GM12878 (cell line): ENCODE measurements at regions of chr6 and their contacts with region 1.

Region 1: DNA sequence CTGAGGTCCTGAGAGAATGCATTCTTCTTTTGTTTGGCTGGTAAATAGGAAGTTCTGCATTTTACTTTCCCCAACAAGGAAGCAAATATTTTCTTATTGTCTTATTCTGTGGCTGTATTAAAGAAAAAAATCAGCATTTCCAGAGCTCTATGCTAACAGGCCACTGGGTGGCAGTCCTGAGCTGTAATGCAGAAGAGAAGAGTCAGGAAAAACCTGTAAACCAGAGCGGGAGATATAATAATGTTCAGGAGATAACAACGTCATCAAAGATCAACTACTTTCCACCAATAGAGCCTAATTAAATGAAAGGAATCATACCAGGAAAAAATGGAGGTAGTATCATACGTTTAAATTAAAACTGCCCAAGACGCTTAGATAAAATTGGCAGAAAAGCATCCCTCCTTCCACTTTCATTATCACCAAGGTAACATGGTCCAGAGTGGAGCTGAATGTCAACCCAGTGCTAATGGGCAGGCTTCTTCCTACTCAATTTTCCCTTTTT is 55.6 kb upstream of the CARMIL1 start:
- DNase-seq: peak; percentile 19
- ATAC-seq: peak; percentile 81
- H3K4me3 ChIP-seq: no peak overlapping the region; the same call in 1 of the 2 replicates
- H3K27ac ChIP-seq: no peak overlapping the region
- H3K4me1 ChIP-seq: no peaks in the 10 kb centered on the region
- H3K27me3 ChIP-seq: no peaks in the 10 kb centered on the region; a peak in 1 of 4 replicates
- CTCF ChIP-seq: peak; percentile 82 to 90 (median 84)
- EP300 ChIP-seq: 0 out of 4 replicates have a peak, but pooled peaks of 1 of the 2 experiments have one; percentile 11
- POLR2A ChIP-seq: no peak
- RAD21 ChIP-seq: peak; percentile 91

Region 2: DNA sequence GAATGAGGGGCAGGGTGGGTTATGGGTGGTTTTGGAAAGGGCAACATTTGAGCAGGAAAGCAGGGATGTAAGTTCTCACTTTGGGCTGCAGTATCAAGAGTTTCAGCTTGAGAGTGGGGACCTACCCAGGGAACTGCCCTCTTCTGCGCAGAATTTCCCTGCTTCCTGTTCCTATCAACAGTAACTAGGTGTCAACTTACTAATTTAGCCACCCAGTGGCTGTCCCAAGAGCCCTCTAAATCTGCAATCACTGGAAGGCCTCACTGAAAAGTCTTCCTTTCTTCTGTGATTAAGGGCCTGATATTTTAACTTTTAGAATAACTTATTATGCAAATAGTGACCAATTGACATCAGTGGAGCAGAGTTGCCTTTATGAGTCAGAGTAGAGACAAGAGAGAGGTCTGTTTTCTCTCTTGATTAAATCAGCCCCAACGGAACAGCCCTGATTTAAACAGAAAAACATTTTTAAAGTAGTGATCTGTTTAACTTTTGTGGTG is 169.6 kb before region 1 on chr6:
- CTCF ChIA-PET with region 1: no interaction called
- POLR2A ChIA-PET with region 1: no interaction called
- RAD21 ChIA-PET with region 1: no interaction called
- SMC1A ChIA-PET with region 1: no interaction called
- in situ Hi-C with region 1: no loop called
- intact Hi-C with region 1: no loop called
- DNase-seq: no peak
- ATAC-seq: peak; percentile 93
- H3K4me3 ChIP-seq: no peak overlapping the region
- H3K27ac ChIP-seq: peak overlapping the region; percentile 41
- H3K4me1 ChIP-seq: peaks cover 26% of the 10 kb centered on the region
- H3K27me3 ChIP-seq: no peaks in the 10 kb centered on the region
- CTCF ChIP-seq: peak in 2 of 3 experiments; percentile 16 to 20; a peak in 2 of 6 replicates
- EP300 ChIP-seq: peak in 1 of 2 experiments; percentile 29; a peak in 1 of 4 replicates
- POLR2A ChIP-seq: no peak
- RAD21 ChIP-seq: peak; percentile 21; the same call in 1 of the 2 replicates

Region 3: DNA sequence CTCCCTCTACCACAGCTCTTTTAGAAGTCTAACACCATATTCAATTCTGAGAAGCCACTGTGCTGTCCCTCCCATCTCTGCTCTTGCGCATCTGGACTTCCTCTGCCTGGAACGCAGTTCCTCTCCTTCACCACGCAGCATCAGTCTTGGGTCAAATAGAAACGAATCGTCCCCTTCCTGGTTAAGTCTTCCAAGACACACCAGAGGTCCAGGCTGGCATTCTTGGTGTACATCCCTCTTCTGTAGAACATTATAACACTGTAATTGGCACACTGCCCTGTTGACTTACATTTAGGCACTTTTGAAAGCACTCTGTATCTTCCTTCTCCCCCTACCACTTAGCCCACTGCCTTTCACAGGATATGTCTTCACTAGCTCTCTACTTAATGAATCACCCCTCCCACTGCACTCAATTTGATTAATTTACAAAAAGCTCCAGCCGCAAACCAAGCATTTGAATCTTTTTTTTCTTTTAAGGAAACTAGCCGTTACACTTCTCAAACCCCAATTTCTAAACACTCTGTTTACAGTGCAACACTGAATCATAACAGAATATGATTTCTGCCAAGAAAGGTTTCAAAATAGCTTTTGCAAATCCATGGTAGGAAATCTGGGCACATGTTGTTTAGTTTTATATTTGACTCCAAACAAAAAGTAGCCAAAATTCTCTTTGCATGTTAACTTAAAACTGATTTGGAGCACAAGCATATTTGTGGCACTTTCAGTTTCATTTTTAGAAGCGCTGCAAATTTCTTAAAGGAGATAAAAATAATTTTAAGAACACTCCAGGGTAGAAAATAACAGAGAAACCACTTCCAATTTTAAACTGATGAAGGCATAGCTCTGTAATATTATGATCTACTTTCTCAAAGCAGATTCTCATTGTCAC is 85.1 kb before region 1 on chr6:
- CTCF ChIA-PET with region 1: interaction called, 10 read pairs
- POLR2A ChIA-PET with region 1: no interaction called
- RAD21 ChIA-PET with region 1: no interaction called
- SMC1A ChIA-PET with region 1: interaction called, 5 read pairs
- in situ Hi-C with region 1: no loop called
- intact Hi-C with region 1: no loop called
- DNase-seq: peak; percentile 81
- ATAC-seq: peak; percentile 95
- H3K4me3 ChIP-seq: peak overlapping the region; percentile 74
- H3K27ac ChIP-seq: peak overlapping the region; percentile 98
- H3K4me1 ChIP-seq: peaks cover 7% of the 10 kb centered on the region
- H3K27me3 ChIP-seq: no peaks in the 10 kb centered on the region
- CTCF ChIP-seq: peak; percentile 6 to 39 (median 25); a peak in 2 of 6 replicates
- EP300 ChIP-seq: peak; percentile 24 to 32; a peak in 1 of 4 replicates
- POLR2A ChIP-seq: peak; percentile 80
- RAD21 ChIP-seq: peak; percentile 46

Region 4: GRCh38 chr6:25623879-25624278 is 400.3 kb after region 1 on chr6:
- CTCF ChIA-PET with region 1: no interaction called
- POLR2A ChIA-PET with region 1: no interaction called
- RAD21 ChIA-PET with region 1: no interaction called
- SMC1A ChIA-PET with region 1: no interaction called
- in situ Hi-C with region 1: no loop called
- intact Hi-C with region 1: no loop called
- DNase-seq: no peak
- ATAC-seq: no peak
- H3K4me3 ChIP-seq: no peak overlapping the region
- H3K27ac ChIP-seq: no peak overlapping the region
- H3K4me1 ChIP-seq: no peaks in the 10 kb centered on the region
- H3K27me3 ChIP-seq: no peaks in the 10 kb centered on the region
- CTCF ChIP-seq: no peak
- EP300 ChIP-seq: no peak
- POLR2A ChIP-seq: no peak
- RAD21 ChIP-seq: no peak